Activated CD4-positive, alpha-beta memory T cell treated with anti-CD3 and anti-CD28 coated beads for 36 hours (primary cell): ENCODE measurements at regions of chr7 and their contacts with region 1.

Region 1: DNA sequence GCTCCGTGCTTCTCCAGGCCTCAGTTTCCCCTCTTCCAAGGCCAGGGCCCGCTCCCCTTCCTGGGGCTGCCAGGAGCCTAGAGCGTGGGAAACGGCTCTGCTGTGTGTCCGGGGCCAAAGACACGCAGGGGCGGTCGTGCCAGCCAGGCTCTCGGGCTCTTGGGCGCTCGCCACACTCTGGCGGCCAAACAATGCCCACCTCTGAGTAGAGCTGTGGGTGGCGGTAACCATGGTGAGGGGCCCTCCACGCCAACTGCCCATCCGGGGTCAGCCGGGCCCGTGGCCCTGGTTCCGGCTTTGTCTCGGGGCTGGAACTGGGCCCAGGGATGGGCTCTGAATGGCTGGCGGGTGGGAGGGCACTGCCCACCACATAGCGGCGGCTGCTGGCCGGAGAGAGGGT is 16.0 kb downstream of the GRIFIN start:
- DNase-seq: no peak
- H3K4me3 Mint-ChIP-seq: no peak overlapping the region
- H3K27ac Mint-ChIP-seq: no peak overlapping the region
- H3K4me1 Mint-ChIP-seq: peaks cover 7% of the 10 kb centered on the region
- H3K27me3 Mint-ChIP-seq: no peaks in the 10 kb centered on the region

Region 2: GRCh38 chr7:2471396-2471795 is 11.2 kb after region 1 on chr7:
- CTCF ChIA-PET with region 1: interaction called, 17 read pairs
- POLR2A ChIA-PET with region 1: no interaction called
- intact Hi-C with region 1: no loop called
- DNase-seq: no peak
- H3K4me3 Mint-ChIP-seq: no peak overlapping the region
- H3K27ac Mint-ChIP-seq: no peak overlapping the region
- H3K4me1 Mint-ChIP-seq: peaks cover 3% of the 10 kb centered on the region
- H3K27me3 Mint-ChIP-seq: peaks cover 2% of the 10 kb centered on the region